Activated CD8-positive, alpha-beta T cell treated with anti-CD3 and anti-CD28 coated beads for 36 hours (primary cell): ENCODE measurements at regions of chr16 and their contacts with region 1.

Region 1: DNA sequence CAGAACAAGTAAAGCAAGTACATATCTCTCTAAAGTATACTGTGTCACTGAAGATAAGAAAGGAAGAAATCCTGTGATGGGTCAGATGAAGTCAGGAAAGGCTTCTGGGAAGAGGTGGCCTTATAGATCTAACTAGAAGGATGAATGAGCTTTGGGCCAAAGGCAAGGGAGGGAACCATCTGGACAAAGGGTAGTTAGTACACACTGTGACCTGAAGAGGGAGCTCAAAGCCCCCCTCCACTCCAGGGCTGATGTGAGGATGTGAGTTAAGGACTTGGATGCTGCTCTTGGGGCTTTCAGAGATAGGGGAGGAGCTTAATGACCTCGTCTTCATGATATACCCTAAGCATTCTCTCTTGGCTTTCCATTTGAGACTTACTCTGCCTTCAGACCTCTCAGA is 185.3 kb upstream of the CACNG3 start:
- DNase-seq: peak; percentile 55
- ATAC-seq: peak; percentile 93
- H3K4me3 Mint-ChIP-seq: no peak overlapping the region
- H3K27ac Mint-ChIP-seq: no peak overlapping the region
- H3K4me1 Mint-ChIP-seq: peaks cover 31% of the 10 kb centered on the region
- H3K27me3 Mint-ChIP-seq: no peaks in the 10 kb centered on the region
- CTCF ChIP-seq: peak; percentile 53

Region 2: GRCh38 chr16:24022797-24023196 is 48.1 kb before region 1 on chr16:
- CTCF ChIA-PET with region 1: no interaction called
- POLR2A ChIA-PET with region 1: no interaction called
- intact Hi-C with region 1: no loop called
- DNase-seq: no peak
- ATAC-seq: no peak
- H3K4me3 Mint-ChIP-seq: no peak overlapping the region
- H3K27ac Mint-ChIP-seq: no peak overlapping the region
- H3K4me1 Mint-ChIP-seq: peaks cover 20% of the 10 kb centered on the region
- H3K27me3 Mint-ChIP-seq: no peaks in the 10 kb centered on the region
- CTCF ChIP-seq: no peak

Region 3: DNA sequence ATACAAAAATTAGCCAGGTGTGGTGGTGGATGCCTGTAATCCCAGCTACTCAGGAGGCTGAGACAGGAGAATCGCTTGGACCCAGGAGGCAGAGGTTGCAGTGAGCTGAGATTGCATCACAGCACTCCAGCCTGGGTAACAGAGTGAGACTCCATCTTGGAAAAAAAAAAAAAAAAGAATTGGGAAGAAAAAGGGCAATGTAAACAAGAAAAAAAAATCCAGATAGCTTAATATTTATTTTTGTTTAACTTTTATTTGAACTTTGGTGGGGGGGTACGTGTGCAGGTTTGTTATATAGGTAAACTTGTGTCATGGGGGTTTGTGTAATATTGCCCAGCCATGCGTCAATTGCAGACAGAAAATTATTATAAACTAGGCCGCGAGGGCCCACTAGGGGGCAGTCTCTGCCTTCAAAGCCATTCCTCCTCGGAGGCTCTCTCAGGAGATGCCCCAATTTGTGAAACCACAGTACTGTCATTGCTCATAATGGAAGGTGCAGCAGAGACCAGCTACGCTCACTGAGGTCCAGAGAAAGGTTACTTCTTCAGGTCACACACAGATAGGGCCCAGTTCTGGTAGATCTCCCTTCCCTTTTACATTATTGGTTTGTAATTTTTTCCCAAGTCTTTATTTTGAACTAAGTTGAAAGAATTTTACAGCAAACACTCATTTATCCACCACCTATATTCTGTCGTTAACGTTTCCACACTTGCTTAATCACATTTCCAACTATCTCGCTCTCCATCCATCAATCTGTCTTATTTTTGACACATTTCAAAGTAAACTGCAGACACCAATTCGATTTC is 28.8 kb before region 1 on chr16:
- CTCF ChIA-PET with region 1: interaction called, 10 read pairs
- POLR2A ChIA-PET with region 1: no interaction called
- intact Hi-C with region 1: no loop called
- DNase-seq: peak; percentile 92
- ATAC-seq: peak; percentile 97
- H3K4me3 Mint-ChIP-seq: no peak overlapping the region
- H3K27ac Mint-ChIP-seq: no peak overlapping the region
- H3K4me1 Mint-ChIP-seq: peaks cover 4% of the 10 kb centered on the region
- H3K27me3 Mint-ChIP-seq: no peaks in the 10 kb centered on the region
- CTCF ChIP-seq: peak; percentile 86

Region 4: GRCh38 chr16:24054741-24055491 is 15.9 kb before region 1 on chr16:
- CTCF ChIA-PET with region 1: interaction called, 14 read pairs
- POLR2A ChIA-PET with region 1: no interaction called
- intact Hi-C with region 1: no loop called
- DNase-seq: no peak
- ATAC-seq: no peak
- H3K4me3 Mint-ChIP-seq: no peak overlapping the region
- H3K27ac Mint-ChIP-seq: no peak overlapping the region
- H3K4me1 Mint-ChIP-seq: peaks cover 8% of the 10 kb centered on the region
- H3K27me3 Mint-ChIP-seq: no peaks in the 10 kb centered on the region
- CTCF ChIP-seq: no peak

Region 5: GRCh38 chr16:24098896-24099295 is 28.0 kb after region 1 on chr16:
- CTCF ChIA-PET with region 1: interaction called, 15 read pairs
- POLR2A ChIA-PET with region 1: no interaction called
- intact Hi-C with region 1: no loop called
- DNase-seq: no peak
- ATAC-seq: no peak
- H3K4me3 Mint-ChIP-seq: no peak overlapping the region
- H3K27ac Mint-ChIP-seq: no peak overlapping the region
- H3K4me1 Mint-ChIP-seq: peaks cover 5% of the 10 kb centered on the region
- H3K27me3 Mint-ChIP-seq: no peaks in the 10 kb centered on the region
- CTCF ChIP-seq: no peak

Region 6: DNA sequence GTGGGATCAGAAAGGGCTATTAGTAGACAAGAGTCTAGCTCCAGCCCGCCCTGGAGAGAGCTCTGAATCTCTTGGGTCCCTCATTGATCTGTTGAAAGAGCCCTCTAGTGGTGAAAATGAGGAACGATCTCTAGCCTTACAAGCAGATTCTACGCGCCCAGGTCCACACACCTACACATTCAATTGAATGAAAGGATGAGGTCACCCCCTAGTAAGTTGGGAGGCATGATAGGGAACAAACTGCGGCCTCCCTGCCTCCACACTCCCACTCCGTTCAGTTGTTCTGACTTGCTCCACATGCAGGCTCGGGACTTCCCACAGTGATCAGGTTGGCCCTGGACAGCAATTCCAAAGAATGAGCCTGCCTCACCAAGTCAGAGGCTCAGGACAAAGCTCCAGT is 182.3 kb after region 1 on chr16:
- CTCF ChIA-PET with region 1: interaction called, 47 read pairs
- POLR2A ChIA-PET with region 1: no interaction called
- intact Hi-C with region 1: no loop called
- DNase-seq: peak; percentile 57
- ATAC-seq: peak; percentile 69
- H3K4me3 Mint-ChIP-seq: no peak overlapping the region
- H3K27ac Mint-ChIP-seq: no peak overlapping the region
- H3K4me1 Mint-ChIP-seq: no peaks in the 10 kb centered on the region
- H3K27me3 Mint-ChIP-seq: peaks cover 47% of the 10 kb centered on the region
- CTCF ChIP-seq: peak; percentile 77

Region 7: GRCh38 chr16:24478401-24478800 is 407.6 kb after region 1 on chr16:
- CTCF ChIA-PET with region 1: no interaction called
- POLR2A ChIA-PET with region 1: no interaction called
- intact Hi-C with region 1: no loop called
- DNase-seq: no peak
- ATAC-seq: no peak
- H3K4me3 Mint-ChIP-seq: no peak overlapping the region
- H3K27ac Mint-ChIP-seq: no peak overlapping the region
- H3K4me1 Mint-ChIP-seq: no peaks in the 10 kb centered on the region
- H3K27me3 Mint-ChIP-seq: peaks cover 13% of the 10 kb centered on the region
- CTCF ChIP-seq: no peak

Region 8: GRCh38 chr16:24504472-24505345 is 433.9 kb after region 1 on chr16:
- CTCF ChIA-PET with region 1: interaction called, 18 read pairs
- POLR2A ChIA-PET with region 1: no interaction called
- intact Hi-C with region 1: no loop called
- DNase-seq: peak; percentile 66
- ATAC-seq: peak; percentile 88
- H3K4me3 Mint-ChIP-seq: no peak overlapping the region
- H3K27ac Mint-ChIP-seq: no peak overlapping the region
- H3K4me1 Mint-ChIP-seq: no peaks in the 10 kb centered on the region
- H3K27me3 Mint-ChIP-seq: peaks cover 10% of the 10 kb centered on the region
- CTCF ChIP-seq: peak; percentile 76